ENCODE measurements at regions of chr4 and their contacts with region 1.

Region 1: GRCh38 chr4:973431-974397 is at the start of gene DGKQ:
- DNase-seq: peak; percentile 76 to 80
- H3K4me3 ChIP-seq: peak within 1 kb of the TSS; percentile 25 to 72 (median 70)
- H3K27ac ChIP-seq: no peak within 1 kb of the TSS
- H3K4me1 ChIP-seq: peaks cover 16 to 21% of the 10 kb centered on the region in 2 donors
- H3K27me3 ChIP-seq: no peaks in the 10 kb centered on the region
- CTCF ChIP-seq: no peak
- POLR2A ChIP-seq: peak in 1 of 2 donors; percentile 57
- total RNA-seq, gene DGKQ: 10.2 to 17.0 (median 11.6) TPM

Region 2: GRCh38 chr4:931960-932712 is 41.6 kb before region 1 on chr4 and contains the starts of genes GAK and TMEM175:
- intact Hi-C with region 1: loop called (anchors 2 kb)
- DNase-seq: peak; percentile 96
- H3K4me3 ChIP-seq: peak within 1 kb of the TSS; percentile 97 to 99 (median 98)
- H3K27ac ChIP-seq: peak within 1 kb of the TSS; percentile 51 to 87 (median 78)
- H3K4me1 ChIP-seq: peaks cover 16 to 33% of the 10 kb centered on the region in 2 donors
- H3K27me3 ChIP-seq: no peaks in the 10 kb centered on the region
- CTCF ChIP-seq: peak in 1 of 6 experiments; percentile 36
- POLR2A ChIP-seq: peak; percentile 33 to 83
- total RNA-seq, gene GAK: 86.4 to 184 (median 153) TPM
- total RNA-seq, gene TMEM175: 33.6 to 63.9 (median 40.4) TPM

Measured in thyroid gland (tissue), 4 donors.